Tibial artery (tissue), 4 donors: ENCODE measurements at regions of chr14 and their contacts with region 1.

Region 1: DNA sequence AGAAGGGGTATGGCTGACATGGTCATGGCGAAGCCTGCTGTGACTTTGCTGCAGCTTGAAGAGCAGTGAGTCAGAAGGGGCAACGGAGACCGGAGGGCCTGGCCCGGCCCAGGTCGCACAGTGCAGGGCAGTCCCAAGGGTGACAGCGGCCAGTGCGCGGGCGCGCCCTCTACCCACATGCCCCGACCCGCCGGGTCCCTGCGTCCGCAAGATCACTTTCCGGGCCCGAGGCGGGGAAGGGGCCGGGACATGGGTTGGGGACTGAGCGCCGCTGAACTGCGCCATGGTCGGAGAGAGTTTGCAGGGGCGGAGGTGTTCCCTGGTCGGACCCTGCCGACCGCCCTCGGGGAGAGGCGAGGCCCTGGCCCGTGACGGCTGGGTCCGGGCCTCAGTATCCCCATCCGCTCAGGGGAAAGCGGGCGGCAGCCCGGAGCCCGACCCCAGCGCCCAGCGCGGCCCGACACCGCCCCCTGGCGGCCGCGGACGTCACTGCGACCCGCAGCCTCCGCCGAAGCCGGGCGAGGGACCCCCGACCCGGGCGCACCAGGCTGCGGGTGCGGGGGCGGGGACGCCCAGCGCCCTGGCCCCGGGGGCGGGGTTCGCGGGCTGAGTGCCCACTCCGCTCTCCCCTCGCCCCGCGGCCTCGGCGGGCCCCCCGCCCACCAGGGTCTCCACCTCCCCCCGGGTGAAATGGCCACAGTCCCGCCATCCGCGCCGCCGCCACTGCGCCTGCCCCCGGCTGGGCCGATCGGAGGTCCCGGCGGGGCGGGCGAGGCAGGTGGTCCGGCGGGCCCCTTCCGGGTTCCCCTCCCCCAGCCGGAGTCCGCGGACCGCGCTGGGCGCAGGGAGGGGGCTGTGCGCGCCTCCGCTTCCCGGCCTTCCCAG is 7.2 kb upstream of the ANKRD9 start:
- DNase-seq: no peak
- H3K4me3 ChIP-seq: peak overlapping the region; percentile 55 to 58
- H3K27ac ChIP-seq: peak overlapping the region; percentile 45 to 46
- H3K4me1 ChIP-seq: peaks cover 0 to 14% (median 11%) of the 10 kb centered on the region in 4 donors
- H3K27me3 ChIP-seq: no peaks in the 10 kb centered on the region
- CTCF ChIP-seq: peak; percentile 77 to 97

Region 2: DNA sequence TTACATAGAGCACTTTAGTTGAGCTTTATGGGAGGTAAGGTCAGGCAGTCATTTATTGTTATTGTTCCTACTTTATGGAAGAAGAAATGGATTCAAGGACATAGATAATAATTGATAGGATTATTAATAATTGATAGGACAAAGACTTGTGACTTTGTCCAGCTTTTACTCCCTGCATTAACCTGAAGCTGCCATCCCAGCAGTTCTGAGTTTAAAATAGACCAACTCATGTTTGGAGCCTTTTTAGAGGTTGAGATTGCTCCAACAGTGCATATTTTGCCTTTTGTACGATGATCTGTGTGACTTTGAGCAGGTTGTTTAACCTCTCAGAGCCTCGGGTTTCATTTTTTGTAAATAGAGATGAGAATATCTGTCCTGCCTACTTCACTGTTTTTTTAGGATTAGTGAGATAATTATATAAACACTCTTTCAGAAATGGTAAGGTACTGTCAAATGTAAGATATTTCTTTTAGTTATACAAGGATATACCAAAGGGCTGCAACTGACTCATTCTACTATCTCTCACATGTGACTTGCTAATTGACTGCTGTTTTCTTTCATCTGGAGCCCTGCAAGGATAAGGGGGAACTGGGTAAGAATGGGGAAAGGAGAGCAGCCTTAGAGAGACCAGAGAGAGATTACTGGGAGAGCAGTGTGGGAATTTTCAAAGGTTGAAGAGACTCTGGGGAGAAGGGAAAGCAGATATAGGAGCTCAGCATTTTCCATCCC is 361.8 kb before region 1 on chr14:
- intact Hi-C with region 1: no loop called
- DNase-seq: no peak
- H3K4me3 ChIP-seq: no peak overlapping the region
- H3K27ac ChIP-seq: no peak overlapping the region
- H3K4me1 ChIP-seq: peaks cover 0 to 9% (median 0%) of the 10 kb centered on the region in 4 donors
- H3K27me3 ChIP-seq: no peaks in the 10 kb centered on the region
- CTCF ChIP-seq: no peak

Region 3: GRCh38 chr14:102437997-102438915 is 78.5 kb before region 1 on chr14:
- intact Hi-C with region 1: loop called (anchors 2 kb)
- DNase-seq: peak; percentile 77 to 89
- H3K4me3 ChIP-seq: peak overlapping the region; percentile 22 to 39
- H3K27ac ChIP-seq: no peak overlapping the region
- H3K4me1 ChIP-seq: peaks cover 0 to 5% (median 3%) of the 10 kb centered on the region in 4 donors
- H3K27me3 ChIP-seq: no peaks in the 10 kb centered on the region
- CTCF ChIP-seq: peak; percentile 71 to 74